RWPE1 (cell line): ENCODE measurements at regions of chr19 and their contacts with region 1.

Region 1: DNA sequence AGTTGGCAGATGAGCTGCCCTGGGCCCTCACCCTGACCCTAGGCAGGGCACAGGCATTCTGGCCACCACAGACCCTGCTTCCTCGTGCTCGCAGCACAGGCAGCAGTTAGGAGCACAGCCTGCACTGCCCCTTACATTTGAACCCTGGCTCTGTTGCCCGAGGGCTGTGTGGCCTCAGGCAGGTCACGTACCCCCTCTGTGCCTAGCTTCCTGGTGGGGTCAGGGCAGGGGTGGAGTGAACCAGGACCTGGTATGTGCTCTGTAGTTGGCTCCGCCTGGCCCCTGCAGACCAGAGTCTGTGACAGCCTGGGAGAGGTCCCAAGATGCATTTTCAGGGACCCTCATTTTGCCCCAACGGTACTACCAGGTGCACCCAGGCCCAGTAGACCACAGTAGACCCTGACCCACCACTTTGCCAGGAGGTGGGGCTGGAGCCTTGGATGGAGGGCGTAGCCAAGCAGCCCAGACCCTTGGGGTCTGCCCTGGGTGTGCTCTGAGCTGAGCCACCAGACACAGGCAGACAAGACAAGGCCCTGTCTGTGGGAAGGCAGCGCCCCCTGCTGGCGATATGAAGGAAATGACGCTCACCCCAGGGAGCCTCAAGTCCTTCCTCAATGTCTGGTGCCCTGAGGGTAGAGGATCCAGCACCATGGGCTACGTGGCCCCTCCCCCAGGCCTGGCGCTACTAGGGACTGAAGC is 9.1 kb downstream of the LYL1 start:
- DNase-seq: peak; percentile 77
- H3K27ac ChIP-seq: peak overlapping the region; percentile 72
- CTCF ChIP-seq: peak; percentile 88

Region 2: GRCh38 chr19:12965017-12965811 is 128.3 kb before region 1 on chr19:
- CTCF ChIA-PET with region 1: interaction called, 35 read pairs
- POLR2A ChIA-PET with region 1: no interaction called
- DNase-seq: peak; percentile 74
- H3K27ac ChIP-seq: peak overlapping the region; percentile 77
- CTCF ChIP-seq: peak; percentile 98

Region 3: DNA sequence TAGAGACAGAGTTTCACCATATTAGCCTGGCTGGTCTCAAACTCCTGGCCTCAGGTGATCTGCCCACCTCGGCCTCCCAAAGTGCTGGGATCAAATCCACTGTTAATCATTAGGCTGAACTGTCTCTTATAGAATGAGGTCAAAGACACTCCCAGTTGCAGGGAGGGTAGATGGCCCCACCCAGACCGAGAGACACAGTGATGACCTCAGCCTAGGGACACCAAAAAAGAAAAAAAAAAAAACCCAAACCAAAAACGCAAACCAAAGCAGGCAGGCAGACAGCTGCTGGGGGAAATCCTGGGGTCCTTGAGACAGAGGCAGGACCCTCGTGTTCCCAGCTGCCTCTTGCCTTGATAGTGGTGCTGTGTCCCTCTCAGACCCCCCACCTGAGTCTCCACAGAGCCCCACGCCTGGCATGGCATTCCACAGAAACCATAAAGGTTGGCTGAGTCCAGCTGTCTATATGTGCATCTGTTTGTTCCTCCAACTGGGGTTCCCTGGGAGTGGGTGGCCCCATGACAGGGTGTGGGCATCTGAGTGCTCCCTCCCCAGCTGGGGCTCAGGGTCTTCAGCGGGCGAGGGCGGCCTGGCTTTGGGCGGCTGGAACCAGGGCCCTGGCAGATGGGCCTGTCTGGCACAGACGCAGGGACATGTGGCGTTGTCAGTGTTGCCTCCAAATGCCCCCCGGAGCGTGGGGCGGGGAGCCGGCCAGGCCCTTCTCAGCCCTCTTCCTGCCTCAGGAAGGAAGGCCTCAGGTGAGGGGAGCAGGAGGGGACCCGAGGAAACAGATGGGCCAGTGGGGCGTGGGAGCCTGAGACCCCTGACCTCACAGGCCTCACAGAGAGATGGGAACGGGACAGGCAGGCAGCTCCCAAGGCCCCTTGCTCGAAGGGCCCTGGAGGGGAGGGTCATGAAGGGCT is 119.0 kb before region 1 on chr19:
- CTCF ChIA-PET with region 1: interaction called, 37 read pairs
- POLR2A ChIA-PET with region 1: no interaction called
- DNase-seq: no peak
- H3K27ac ChIP-seq: 0 out of 2 replicates have a peak overlapping the region, but pooled peaks have one; percentile 24
- CTCF ChIP-seq: no peak

Region 4: DNA sequence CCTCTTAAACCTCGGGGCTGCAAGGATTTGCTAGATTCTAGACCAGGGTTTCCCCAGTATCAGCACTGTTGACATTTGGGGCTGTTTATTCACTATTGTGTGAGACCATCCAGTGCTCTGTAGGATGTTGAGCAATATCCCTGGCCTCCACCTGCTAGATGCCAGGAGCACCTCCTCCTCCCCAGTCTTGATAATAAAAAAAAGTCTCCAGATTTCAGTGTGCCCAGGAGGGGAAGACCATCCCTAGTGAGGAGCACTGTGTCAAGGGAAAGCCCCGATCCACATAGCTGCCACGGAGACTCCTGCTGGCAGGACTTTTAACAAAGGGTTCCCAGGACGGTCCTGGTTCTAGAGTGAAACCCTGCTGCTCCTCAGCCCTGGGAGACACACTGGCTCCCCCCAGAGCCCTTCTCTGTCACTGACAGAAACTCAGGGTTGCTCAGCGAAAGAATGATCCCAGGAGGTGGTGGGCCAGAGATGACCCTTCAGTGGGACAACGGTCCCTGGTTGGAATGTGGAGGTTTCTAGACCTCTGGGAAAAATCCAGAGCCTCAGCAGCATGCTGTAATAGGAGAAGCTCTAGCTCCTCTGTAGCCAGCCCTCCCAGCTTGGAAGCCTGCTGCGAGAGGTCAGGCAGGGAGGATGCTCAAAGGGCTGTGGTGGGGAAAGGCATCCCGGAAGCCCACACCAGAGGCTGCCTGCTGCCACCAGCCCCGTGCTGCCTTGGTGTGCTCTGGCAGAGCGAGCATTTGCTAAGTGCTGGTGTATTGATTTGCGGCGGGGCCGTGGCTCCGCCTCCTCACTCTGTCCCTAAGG is 11.2 kb before region 1 on chr19:
- CTCF ChIA-PET with region 1: interaction called, 11 read pairs
- POLR2A ChIA-PET with region 1: no interaction called
- DNase-seq: no peak
- H3K27ac ChIP-seq: peak overlapping the region; percentile 36
- CTCF ChIP-seq: no peak

Region 5: GRCh38 chr19:13152974-13153629 is 59.5 kb after region 1 on chr19:
- CTCF ChIA-PET with region 1: no interaction called
- POLR2A ChIA-PET with region 1: no interaction called
- DNase-seq: peak; percentile 94
- H3K27ac ChIP-seq: peak overlapping the region; percentile 100
- CTCF ChIP-seq: peak; percentile 49

Region 6: GRCh38 chr19:13190781-13191540 is 97.4 kb after region 1 on chr19:
- CTCF ChIA-PET with region 1: no interaction called
- POLR2A ChIA-PET with region 1: no interaction called
- DNase-seq: no peak
- H3K27ac ChIP-seq: peak overlapping the region; percentile 6; the same call in 1 of the 2 replicates
- CTCF ChIP-seq: no peak

Region 7: GRCh38 chr19:13373602-13374001 is 280.0 kb after region 1 on chr19:
- CTCF ChIA-PET with region 1: no interaction called
- POLR2A ChIA-PET with region 1: no interaction called
- DNase-seq: no peak
- H3K27ac ChIP-seq: no peak overlapping the region
- CTCF ChIP-seq: no peak